Naive thymus-derived CD4-positive, alpha-beta T cell (primary cell): ENCODE measurements at regions of chr11 and their contacts with region 1.

Region 1: GRCh38 chr11:20387241-20388095 is at the start of gene PRMT3:
- DNase-seq: peak; percentile 96 to 99 (median 98)
- ATAC-seq: peak; percentile 95
- H3K4me3 ChIP-seq: peak within 1 kb of the TSS; percentile 65
- H3K4me3 Mint-ChIP-seq: peak within 1 kb of the TSS; percentile 96 to 100 (median 98)
- H3K27ac ChIP-seq: peak within 1 kb of the TSS; percentile 87
- H3K27ac Mint-ChIP-seq: peak within 1 kb of the TSS; percentile 96 to 100 (median 100)
- H3K4me1 ChIP-seq: peaks cover 14% of the 10 kb centered on the region in 2 donors
- H3K4me1 Mint-ChIP-seq: peaks cover 9 to 37% (median 26%) of the 10 kb centered on the region in 7 donors
- H3K27me3 ChIP-seq: no peaks in the 10 kb centered on the region
- H3K27me3 Mint-ChIP-seq: no peaks in the 10 kb centered on the region
- total RNA-seq, gene PRMT3: 12.5 to 19.0 (median 17.7) TPM

Region 2: GRCh38 chr11:20158597-20159257 is 228.7 kb before region 1 on chr11:
- CTCF ChIA-PET with region 1: no interaction called
- POLR2A ChIA-PET with region 1: no interaction called
- intact Hi-C with region 1: loop called in 1 of 2 experiments (anchors 1 kb)
- DNase-seq: peak in 1 of 9 donors; percentile 4
- ATAC-seq: no peak
- H3K4me3 ChIP-seq: no peak overlapping the region
- H3K4me3 Mint-ChIP-seq: peak overlapping the region; percentile 19 to 89 (median 56)
- H3K27ac ChIP-seq: no peak overlapping the region
- H3K27ac Mint-ChIP-seq: peak overlapping the region in 5 of 9 donors; percentile 17 to 79 (median 26)
- H3K4me1 ChIP-seq: peaks cover 5 to 9% of the 10 kb centered on the region in 2 donors
- H3K4me1 Mint-ChIP-seq: peaks cover 26 to 63% (median 50%) of the 10 kb centered on the region in 7 donors
- H3K27me3 ChIP-seq: peaks cover 12 to 39% of the 10 kb centered on the region in 2 donors
- H3K27me3 Mint-ChIP-seq: peaks cover 59 to 87% (median 74%) of the 10 kb centered on the region in 5 donors

Region 3: DNA sequence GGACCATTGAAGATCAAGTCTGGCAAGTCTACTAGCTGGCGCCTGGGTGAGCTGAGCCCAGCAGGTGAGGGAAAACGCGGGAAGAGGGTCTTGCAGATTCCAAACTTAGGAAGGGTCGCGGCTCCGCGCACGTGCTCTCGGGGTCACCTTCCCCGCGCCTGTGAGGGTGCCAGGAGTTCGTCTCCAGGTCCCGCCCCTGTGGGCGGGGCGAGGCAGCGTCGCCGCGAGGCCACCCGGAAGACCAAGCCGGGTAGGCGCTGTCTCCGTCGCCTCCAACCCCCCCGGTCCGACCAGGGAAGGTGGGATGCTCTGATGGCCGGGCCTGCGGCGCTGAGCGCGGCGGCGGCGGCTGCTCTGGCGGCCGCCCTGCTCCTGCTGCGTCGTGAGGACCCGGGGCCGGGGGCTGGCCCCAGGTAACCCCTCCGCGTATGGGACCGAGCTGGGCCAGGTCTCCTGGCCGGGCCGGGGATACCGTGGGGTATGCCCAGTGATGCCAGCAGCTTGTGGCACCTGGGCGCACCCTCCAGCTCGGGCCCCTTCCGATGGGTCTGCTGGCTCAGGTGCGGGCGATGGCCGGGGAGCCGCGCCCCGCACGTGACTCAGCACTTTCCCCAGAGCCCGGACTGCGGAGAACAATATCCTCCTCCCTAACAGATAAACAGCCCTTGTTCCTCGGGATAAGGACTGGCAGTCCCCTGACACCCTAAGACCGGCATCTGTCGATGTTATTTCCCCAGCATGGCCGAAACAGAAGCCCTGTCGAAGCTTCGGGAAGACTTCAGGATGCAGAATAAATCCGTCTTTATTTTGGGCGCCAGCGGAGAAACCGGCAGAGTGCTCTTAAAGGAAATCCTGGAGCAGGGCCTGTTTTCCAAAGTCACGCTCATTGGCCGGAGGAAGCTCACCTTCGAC is 23.7 kb before region 1 on chr11 and contains the start of gene HTATIP2:
- CTCF ChIA-PET with region 1: no interaction called
- POLR2A ChIA-PET with region 1: interaction called, 8 read pairs
- intact Hi-C with region 1: loop called (anchors 1 kb)
- DNase-seq: peak; percentile 62 to 78 (median 72)
- ATAC-seq: peak; percentile 92
- H3K4me3 ChIP-seq: peak within 1 kb of the TSS; percentile 73
- H3K4me3 Mint-ChIP-seq: peak within 1 kb of the TSS; percentile 88 to 96 (median 94)
- H3K27ac ChIP-seq: peak within 1 kb of the TSS; percentile 77
- H3K27ac Mint-ChIP-seq: peak within 1 kb of the TSS; percentile 87 to 97 (median 93)
- H3K4me1 ChIP-seq: peaks cover 27 to 29% of the 10 kb centered on the region in 2 donors
- H3K4me1 Mint-ChIP-seq: peaks cover 33 to 75% (median 72%) of the 10 kb centered on the region in 7 donors
- H3K27me3 ChIP-seq: no peaks in the 10 kb centered on the region
- H3K27me3 Mint-ChIP-seq: no peaks in the 10 kb centered on the region
- total RNA-seq, gene HTATIP2: 12.0 to 47.1 (median 38.6) TPM

Region 4: GRCh38 chr11:20443596-20443995 is 56.1 kb after region 1 on chr11:
- CTCF ChIA-PET with region 1: no interaction called
- POLR2A ChIA-PET with region 1: no interaction called
- intact Hi-C with region 1: loop called in 1 of 2 experiments (anchors 1 kb)
- DNase-seq: peak in 4 of 9 donors; percentile 1 to 4 (median 2)
- ATAC-seq: no peak
- H3K4me3 ChIP-seq: no peak overlapping the region
- H3K4me3 Mint-ChIP-seq: no peak overlapping the region
- H3K27ac ChIP-seq: no peak overlapping the region
- H3K27ac Mint-ChIP-seq: no peak overlapping the region
- H3K4me1 ChIP-seq: no peaks in the 10 kb centered on the region
- H3K4me1 Mint-ChIP-seq: peaks cover 0 to 6% (median under 1%) of the 10 kb centered on the region in 7 donors
- H3K27me3 ChIP-seq: no peaks in the 10 kb centered on the region
- H3K27me3 Mint-ChIP-seq: no peaks in the 10 kb centered on the region

Region 5: GRCh38 chr11:20544603-20545237 is 157.3 kb after region 1 on chr11:
- CTCF ChIA-PET with region 1: no interaction called
- POLR2A ChIA-PET with region 1: no interaction called
- intact Hi-C with region 1: no loop called
- DNase-seq: no peak
- ATAC-seq: no peak
- H3K4me3 ChIP-seq: no peak overlapping the region
- H3K4me3 Mint-ChIP-seq: no peak overlapping the region
- H3K27ac ChIP-seq: no peak overlapping the region
- H3K27ac Mint-ChIP-seq: no peak overlapping the region
- H3K4me1 ChIP-seq: no peaks in the 10 kb centered on the region
- H3K4me1 Mint-ChIP-seq: no peaks in the 10 kb centered on the region
- H3K27me3 ChIP-seq: no peaks in the 10 kb centered on the region
- H3K27me3 Mint-ChIP-seq: peaks cover 0 to 25% (median 5%) of the 10 kb centered on the region in 5 donors

Region 6: GRCh38 chr11:20609727-20610707 is 222.5 kb after region 1 on chr11:
- CTCF ChIA-PET with region 1: no interaction called
- POLR2A ChIA-PET with region 1: no interaction called
- intact Hi-C with region 1: loop called (anchors 1 to 5 kb)
- DNase-seq: peak in 7 of 9 donors; percentile 5 to 74 (median 36)
- ATAC-seq: peak; percentile 74
- H3K4me3 ChIP-seq: no peak overlapping the region
- H3K4me3 Mint-ChIP-seq: peak overlapping the region in 6 of 10 donors; percentile 39 to 65 (median 58)
- H3K27ac ChIP-seq: no peak overlapping the region
- H3K27ac Mint-ChIP-seq: no peak overlapping the region
- H3K4me1 ChIP-seq: no peaks in the 10 kb centered on the region
- H3K4me1 Mint-ChIP-seq: peaks cover 7 to 20% (median 11%) of the 10 kb centered on the region in 7 donors
- H3K27me3 ChIP-seq: peaks cover 0 to 16% of the 10 kb centered on the region in 2 donors
- H3K27me3 Mint-ChIP-seq: peaks cover 66 to 91% (median 81%) of the 10 kb centered on the region in 5 donors